ENCODE measurements at regions of chr14 and their contacts with region 1.

Region 1: DNA sequence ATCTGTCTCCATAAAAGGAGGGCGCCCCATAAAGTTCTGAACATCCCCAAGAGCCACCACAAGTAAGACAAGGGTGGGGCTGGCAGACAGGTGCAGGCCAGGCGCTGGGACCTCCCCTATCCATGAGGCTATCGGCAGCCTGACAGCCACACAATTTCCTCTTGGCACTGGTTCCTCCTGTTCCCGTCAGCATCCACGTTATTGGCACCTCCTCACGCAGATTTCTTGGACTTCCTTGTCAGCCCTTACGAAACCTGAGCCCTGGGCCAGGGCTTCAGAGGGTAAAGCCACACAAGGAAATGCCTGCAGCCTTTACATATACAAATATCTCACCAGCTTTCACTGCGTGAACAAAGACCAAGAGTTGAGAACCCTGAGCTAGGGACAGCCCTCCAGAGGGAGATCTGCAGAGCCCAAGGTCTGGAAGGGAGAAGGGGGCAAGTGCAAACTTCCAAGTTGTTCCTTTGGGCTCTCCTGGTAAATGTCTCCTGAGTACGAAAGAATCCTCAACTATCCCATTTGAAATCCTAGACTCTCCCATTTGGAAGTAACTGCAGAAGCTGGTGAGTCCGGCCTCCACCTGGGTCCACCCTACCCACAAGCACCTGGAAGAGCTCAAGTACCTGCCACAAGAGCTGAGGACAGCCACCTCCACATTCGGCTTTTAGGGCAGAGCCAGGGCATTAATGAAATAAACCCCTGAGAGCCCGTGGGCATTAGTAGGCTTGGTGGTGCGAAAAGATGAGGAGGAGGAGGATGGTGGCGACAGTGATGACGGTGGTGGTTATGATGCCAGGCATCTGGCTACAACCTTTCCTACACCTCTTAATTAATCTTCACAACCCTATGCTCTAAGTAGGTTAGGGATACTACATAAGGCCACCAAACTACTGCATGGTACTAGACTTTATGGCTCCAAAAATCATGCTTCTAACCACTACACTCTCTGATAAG is 5.5 kb upstream of the TC2N start:
- DNase-seq: no peak
- H3K4me3 Mint-ChIP-seq: peak overlapping the region; percentile 71
- H3K27ac Mint-ChIP-seq: peak overlapping the region; percentile 90
- H3K4me1 Mint-ChIP-seq: peaks cover 93% of the 10 kb centered on the region
- H3K27me3 Mint-ChIP-seq: no peaks in the 10 kb centered on the region

Region 2: GRCh38 chr14:91323671-91324605 is 548.9 kb before region 1 on chr14:
- intact Hi-C with region 1: loop called (anchors 5 kb)
- DNase-seq: peak; percentile 84
- H3K4me3 Mint-ChIP-seq: peak overlapping the region; percentile 75
- H3K27ac Mint-ChIP-seq: peak overlapping the region; percentile 99
- H3K4me1 Mint-ChIP-seq: peaks cover 47% of the 10 kb centered on the region
- H3K27me3 Mint-ChIP-seq: no peaks in the 10 kb centered on the region

Region 3: GRCh38 chr14:91836119-91836881 is 36.5 kb before region 1 on chr14:
- intact Hi-C with region 1: loop called (anchors 5 kb)
- DNase-seq: peak; percentile 52
- H3K4me3 Mint-ChIP-seq: peak overlapping the region; percentile 91
- H3K27ac Mint-ChIP-seq: peak overlapping the region; percentile 48
- H3K4me1 Mint-ChIP-seq: peaks cover 43% of the 10 kb centered on the region
- H3K27me3 Mint-ChIP-seq: peaks cover 10% of the 10 kb centered on the region

Region 4: DNA sequence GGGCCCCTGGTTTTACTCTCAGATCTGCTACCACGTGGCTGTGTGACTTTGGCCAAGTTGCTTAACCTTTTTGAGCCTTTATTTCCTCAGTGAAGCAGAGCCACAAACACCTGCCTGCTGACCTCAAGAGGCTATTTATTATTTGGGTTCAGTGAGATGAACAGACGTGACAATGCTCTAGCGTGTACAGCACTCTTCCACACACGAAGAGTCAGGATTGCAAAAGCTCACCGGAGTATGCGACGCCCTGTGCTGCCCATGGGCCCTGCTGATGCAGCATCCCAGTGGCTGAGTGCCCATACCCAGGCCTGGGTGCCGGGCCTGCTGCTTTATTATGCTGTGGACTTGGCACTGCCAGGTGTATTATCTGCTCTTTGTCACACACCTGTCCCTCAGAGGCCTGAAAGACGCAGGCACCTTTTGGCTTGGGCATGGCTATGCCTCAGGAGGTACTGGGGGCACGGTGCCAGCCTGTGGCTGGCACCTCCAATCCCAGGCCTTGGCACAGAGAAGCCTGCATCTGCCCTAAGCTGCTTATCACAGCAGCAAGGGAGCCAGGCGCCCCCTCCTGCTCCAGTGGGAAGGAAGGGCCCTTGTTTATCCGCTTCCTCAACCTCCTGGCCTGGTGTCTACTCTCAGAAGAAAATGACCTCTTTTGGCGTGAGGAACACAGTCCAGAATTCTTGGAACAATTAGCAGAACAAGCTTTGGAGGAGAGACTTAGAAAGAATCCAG is 16.9 kb after region 1 on chr14:
- intact Hi-C with region 1: loop called (anchors 2 kb)
- DNase-seq: no peak
- H3K4me3 Mint-ChIP-seq: no peak overlapping the region
- H3K27ac Mint-ChIP-seq: no peak overlapping the region
- H3K4me1 Mint-ChIP-seq: peaks cover 46% of the 10 kb centered on the region
- H3K27me3 Mint-ChIP-seq: no peaks in the 10 kb centered on the region

Region 5: DNA sequence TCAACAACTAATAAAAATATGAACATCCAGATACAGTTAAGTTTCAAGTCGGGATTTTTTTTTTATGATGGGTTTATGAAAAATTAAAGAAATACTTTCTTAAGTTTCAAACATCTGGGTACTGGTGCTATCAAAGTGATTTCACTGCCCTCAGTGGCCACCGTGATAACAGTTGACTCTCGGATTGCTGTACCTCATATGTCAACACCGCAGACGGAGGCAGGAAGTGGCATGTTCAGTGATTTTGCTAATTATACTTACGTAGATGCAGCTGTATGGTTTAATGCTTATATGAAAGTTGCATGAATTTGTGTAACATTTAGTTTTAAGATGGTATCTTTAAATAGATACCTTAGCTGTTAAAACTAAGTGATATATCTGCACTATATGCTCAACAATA is 95.5 kb after region 1 on chr14:
- intact Hi-C with region 1: loop called (anchors 5 kb)
- DNase-seq: no peak
- H3K4me3 Mint-ChIP-seq: no peak overlapping the region
- H3K27ac Mint-ChIP-seq: peak overlapping the region; percentile 63
- H3K4me1 Mint-ChIP-seq: peaks cover 18% of the 10 kb centered on the region
- H3K27me3 Mint-ChIP-seq: no peaks in the 10 kb centered on the region

Region 6: GRCh38 chr14:91980127-91980741 is 107.4 kb after region 1 on chr14:
- intact Hi-C with region 1: loop called (anchors 5 kb)
- DNase-seq: no peak
- H3K4me3 Mint-ChIP-seq: no peak overlapping the region
- H3K27ac Mint-ChIP-seq: peak overlapping the region; percentile 17
- H3K4me1 Mint-ChIP-seq: peaks cover 42% of the 10 kb centered on the region
- H3K27me3 Mint-ChIP-seq: no peaks in the 10 kb centered on the region

Measured in activated T-helper 2 cell treated with anti-CD3 and anti-CD28 coated beads, Interferon-gamma antibody, Interleukin-2, Interleukin-4, amounts not matched to agents 10 μg/mL and 5 μg/mL and 100 μg/mL, durations not matched to agents 14 hours and 24 hours and 36 hours (primary cell).